Sciatic nerve (tissue), 2 donors: ENCODE measurements at regions of chr20 and their contacts with region 1.

Region 1: DNA sequence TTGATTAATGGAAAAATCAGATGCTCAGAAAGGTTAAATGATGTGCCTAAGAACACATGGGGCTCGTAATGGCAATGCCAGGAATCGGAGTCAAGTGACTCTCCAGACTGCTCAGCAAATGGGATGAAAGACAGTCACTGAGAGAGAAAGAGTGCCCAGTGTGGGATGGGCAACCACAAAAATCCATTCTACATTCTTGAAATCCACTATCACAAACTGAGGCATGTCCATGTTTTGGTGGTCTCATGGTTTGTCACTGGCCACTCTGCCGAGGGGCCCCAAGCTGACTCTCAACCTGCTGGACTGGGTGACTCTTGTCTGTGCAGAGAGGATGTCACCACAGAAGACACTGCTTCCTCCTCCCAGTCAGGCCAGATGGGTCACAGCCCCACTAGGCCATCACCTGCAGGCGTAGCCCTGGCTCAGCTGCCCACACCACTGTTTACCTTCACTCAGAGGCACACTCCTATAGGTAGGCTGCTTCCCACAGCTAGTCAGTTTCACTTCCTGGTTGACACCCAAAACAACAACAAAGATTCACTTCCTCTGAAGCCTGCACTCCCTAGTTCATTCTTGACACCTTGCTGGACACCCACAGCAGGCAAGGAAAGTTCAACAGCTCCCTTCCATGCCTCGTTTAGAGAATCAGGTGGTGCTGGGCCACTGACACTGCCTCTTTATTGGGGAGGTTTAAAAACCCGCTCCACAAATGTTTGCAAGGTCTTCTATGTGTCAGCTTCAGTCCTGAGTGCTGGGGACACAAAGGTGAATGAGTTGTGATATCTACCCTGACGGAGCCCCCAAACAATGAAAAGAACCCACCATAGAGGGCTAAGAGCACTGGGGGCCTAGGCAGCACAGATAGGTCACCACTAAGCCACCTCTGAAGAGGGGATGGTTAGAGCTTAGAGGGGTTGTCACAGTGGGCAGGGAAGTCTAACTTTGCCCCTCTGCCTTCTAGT is 21.7 kb downstream of the MAP1LC3A start:
- DNase-seq: peak; percentile 42
- ATAC-seq: peak; percentile 16

Region 2: DNA sequence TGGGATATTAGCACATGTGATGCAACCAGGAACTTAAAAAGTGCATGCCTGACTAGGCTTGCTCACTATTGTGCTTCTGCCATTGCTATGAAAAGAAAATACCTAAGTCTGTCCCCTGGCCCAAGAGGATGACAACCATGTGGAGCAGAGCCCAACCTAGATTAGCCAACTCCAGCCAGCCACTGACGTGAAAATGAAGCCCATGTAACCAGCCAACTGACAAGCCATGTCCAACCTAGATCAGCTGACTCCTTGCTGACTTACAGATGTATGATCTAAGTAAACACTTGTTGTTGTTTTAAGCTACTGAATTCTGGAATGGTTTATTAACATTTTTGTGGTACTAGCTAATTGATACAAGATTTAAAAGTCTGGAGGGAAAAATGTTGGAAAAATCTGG is 49.1 kb after region 1 on chr20:
- intact Hi-C with region 1: no loop called
- DNase-seq: no peak
- ATAC-seq: no peak

Region 3: DNA sequence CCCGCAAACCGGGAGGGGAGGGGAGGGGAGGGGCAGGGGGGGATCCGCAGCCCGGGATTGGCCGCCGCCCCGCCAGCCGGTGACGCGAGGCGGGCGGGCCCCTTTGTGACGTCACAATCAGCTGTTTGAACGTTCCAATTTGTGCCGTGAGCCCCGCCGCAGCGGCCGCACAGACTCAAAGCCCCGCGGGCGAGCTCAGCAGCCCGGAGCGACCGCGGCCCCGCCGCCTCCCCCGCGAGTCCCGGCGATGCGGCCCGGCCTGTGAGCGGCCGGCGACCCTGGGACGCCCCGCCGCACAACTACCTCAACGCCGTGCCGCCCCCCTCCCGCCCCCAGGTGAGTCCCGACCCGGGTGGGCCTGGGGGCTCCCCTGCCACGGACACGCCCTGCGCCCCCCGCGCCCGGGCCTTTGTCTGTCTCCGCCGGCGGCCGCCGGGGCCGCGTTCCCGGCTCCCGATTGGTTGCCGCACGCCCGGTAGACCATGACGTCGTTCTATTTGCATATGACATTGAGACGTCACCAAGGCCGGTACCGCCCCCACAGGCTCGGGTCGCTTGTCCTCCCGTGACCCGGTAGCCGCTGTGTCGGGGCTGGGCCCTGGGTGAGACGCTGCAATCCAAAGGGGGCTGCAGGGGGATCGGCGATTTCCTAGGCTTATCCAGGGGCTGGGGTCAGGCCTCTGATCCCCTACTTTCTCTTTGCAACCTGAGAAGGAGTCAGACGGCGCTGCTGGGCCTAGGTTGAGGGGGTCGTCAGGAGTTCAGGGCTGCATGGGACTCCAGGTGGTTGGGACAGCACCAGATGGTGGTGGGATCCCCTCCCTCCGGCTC is 124.1 kb after region 1 on chr20 and contains the start of gene TP53INP2:
- intact Hi-C with region 1: loop called (anchors 10 kb)
- DNase-seq: peak; percentile 95
- ATAC-seq: peak; percentile 81
- total RNA-seq, gene TP53INP2: 36.9 TPM

Region 4: DNA sequence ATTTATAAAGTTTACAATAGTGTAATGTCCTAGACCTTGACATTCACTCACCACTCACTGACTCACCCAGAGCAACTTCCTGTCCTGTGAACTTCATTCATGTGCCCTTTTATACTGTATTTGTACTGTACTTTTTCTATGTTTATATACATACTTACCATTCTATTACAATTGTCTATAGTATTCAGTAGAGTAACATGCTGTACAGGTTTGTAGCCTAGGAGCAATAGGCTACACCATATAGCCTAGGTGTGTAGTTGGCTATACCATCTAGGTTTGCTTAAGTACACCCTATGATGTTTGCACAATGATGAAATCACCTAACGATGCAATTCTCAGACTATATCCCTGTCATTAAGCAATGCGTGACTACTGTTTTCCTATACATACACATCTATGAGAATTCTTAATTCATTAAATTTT is 549.4 kb after region 1 on chr20:
- intact Hi-C with region 1: no loop called
- DNase-seq: no peak
- ATAC-seq: no peak